Lower lobe of right lung (tissue), 2 donors: ENCODE measurements at regions of chr5 and their contacts with region 1.

Region 1: GRCh38 chr5:140882591-140882899 is 621 bp downstream of the PCDHA13 start:
- DNase-seq: no peak
- ATAC-seq: peak in 1 of 2 donors; percentile 88
- H3K4me3 ChIP-seq: peak overlapping the region; percentile 37
- H3K27ac ChIP-seq: no peak overlapping the region
- H3K4me1 ChIP-seq: no peaks in the 10 kb centered on the region
- H3K27me3 ChIP-seq: peaks cover 5% of the 10 kb centered on the region
- CTCF ChIP-seq: peak; percentile 14

Region 2: DNA sequence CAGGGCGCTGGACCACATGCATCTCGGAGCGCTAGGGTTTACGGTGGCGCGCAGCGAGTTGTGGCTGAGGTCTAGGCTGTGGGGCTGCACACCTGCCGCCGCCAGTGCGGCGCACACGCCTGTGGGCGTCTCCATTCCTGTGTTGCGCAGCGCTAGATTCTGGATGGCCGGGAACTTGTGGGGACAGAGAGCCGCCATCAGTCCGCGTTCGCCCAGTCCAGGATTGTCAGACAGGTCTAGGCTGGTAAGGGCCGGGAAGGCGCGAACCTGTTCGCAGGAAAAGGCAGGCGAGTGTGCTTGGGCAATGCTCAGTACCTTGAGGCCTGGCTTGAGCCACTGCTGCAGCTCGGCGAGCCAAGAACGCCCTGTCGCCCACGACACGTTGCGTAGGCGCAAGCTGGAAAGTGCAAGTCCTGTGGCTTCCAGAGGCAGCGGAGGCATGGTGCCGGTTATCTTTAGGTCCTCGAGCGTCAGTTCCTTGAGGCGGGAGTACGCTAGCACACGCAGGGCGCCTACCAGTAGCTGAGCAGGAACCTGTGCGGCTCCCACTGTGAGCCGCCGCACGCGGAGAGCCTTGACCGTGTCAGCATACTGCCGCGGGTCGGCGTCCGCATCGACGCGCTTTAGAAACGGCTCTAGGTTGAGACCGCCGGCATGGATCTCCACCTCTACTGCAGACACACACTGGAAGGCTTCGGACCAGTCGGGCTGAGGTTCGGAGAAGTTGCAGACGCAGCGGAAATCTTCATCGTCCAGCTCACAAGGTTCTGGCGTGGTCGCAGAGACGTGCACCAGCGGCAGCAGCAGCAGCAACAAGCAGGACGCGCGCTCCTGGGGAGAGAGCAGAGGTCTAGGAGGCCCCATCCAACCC is 250.2 kb before region 1 on chr5:
- intact Hi-C with region 1: no loop called
- DNase-seq: peak; percentile 90
- ATAC-seq: peak; percentile 75 to 79
- H3K4me3 ChIP-seq: peak overlapping the region; percentile 67
- H3K27ac ChIP-seq: peak overlapping the region; percentile 83
- H3K4me1 ChIP-seq: peaks cover 40% of the 10 kb centered on the region
- H3K27me3 ChIP-seq: no peaks in the 10 kb centered on the region
- CTCF ChIP-seq: no peak

Region 3: GRCh38 chr5:140855772-140856674 is 26.5 kb before region 1 on chr5 and contains the start of gene PCDHA10:
- intact Hi-C with region 1: no loop called
- DNase-seq: no peak
- ATAC-seq: no peak
- H3K4me3 ChIP-seq: peak within 1 kb of the TSS; percentile 32
- H3K27ac ChIP-seq: no peak within 1 kb of the TSS
- H3K4me1 ChIP-seq: no peaks in the 10 kb centered on the region
- H3K27me3 ChIP-seq: no peaks in the 10 kb centered on the region
- CTCF ChIP-seq: peak; percentile 16
- total RNA-seq, gene PCDHA10: 1.5 TPM

Region 4: GRCh38 chr5:141040771-141041426 is 158.4 kb after region 1 on chr5:
- intact Hi-C with region 1: loop called (anchors 10 kb)
- DNase-seq: peak; percentile 92
- ATAC-seq: peak; percentile 97 to 99
- H3K4me3 ChIP-seq: peak overlapping the region; percentile 51
- H3K27ac ChIP-seq: peak overlapping the region; percentile 70
- H3K4me1 ChIP-seq: peaks cover 7% of the 10 kb centered on the region
- H3K27me3 ChIP-seq: no peaks in the 10 kb centered on the region
- CTCF ChIP-seq: peak; percentile 58